CD14-positive monocyte (primary cell): ENCODE measurements at regions of chr2 and their contacts with region 1.

Region 1: DNA sequence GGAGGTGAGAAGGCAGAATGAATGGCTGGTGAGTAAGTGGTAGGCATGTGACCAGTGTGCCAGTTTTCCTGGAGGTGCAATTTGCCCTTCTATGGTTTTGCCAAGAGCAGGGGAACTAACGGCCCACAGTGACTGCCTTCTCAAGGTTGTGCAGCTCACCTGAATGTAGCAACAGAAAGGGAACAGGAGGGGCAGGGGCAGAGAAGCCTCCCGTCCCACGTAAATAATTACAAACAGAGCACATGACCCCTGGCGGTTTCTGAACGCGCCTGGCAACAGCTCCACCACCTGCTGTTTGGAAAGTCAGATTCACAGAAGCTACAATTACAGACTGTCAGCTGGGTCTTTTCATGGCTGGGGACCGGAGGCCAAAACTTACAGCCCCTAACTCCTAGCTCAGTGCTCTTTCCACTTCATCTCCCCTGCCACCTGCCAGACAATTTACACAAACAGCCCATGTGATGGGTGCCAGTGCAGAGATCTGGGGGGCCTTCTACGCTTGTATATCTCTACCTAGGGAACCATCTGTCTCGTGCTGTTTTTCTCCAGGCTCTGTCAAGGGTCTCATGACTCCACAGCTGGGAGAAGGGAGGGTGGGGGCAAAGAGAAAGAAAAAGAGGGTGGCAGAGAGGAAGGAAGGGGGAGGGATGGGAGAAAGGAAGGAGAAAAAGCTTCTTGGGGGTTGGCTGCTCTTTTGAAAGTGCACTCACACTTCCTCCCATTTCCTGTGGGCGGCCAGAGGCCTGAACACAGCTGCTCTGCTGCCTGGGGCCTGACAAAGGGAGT is 69.6 kb downstream of the POLR1A start:
- DNase-seq: peak; percentile 71 to 76 (median 73)
- H3K4me3 ChIP-seq: peak overlapping the region in 1 of 3 experiments; percentile 44
- H3K4me3 Mint-ChIP-seq: peak overlapping the region; percentile 58 to 86
- H3K27ac ChIP-seq: peak overlapping the region; percentile 96
- H3K27ac Mint-ChIP-seq: peak overlapping the region; percentile 94 to 99 (median 97)
- H3K4me1 ChIP-seq: peaks cover 46 to 54% of the 10 kb centered on the region in 2 donors
- H3K4me1 Mint-ChIP-seq: peaks cover 59% of the 10 kb centered on the region
- H3K27me3 ChIP-seq: no peaks in the 10 kb centered on the region
- H3K27me3 Mint-ChIP-seq: peaks cover 0 to 3% (median 2%) of the 10 kb centered on the region in 3 donors
- CTCF ChIP-seq: no peak

Region 2: DNA sequence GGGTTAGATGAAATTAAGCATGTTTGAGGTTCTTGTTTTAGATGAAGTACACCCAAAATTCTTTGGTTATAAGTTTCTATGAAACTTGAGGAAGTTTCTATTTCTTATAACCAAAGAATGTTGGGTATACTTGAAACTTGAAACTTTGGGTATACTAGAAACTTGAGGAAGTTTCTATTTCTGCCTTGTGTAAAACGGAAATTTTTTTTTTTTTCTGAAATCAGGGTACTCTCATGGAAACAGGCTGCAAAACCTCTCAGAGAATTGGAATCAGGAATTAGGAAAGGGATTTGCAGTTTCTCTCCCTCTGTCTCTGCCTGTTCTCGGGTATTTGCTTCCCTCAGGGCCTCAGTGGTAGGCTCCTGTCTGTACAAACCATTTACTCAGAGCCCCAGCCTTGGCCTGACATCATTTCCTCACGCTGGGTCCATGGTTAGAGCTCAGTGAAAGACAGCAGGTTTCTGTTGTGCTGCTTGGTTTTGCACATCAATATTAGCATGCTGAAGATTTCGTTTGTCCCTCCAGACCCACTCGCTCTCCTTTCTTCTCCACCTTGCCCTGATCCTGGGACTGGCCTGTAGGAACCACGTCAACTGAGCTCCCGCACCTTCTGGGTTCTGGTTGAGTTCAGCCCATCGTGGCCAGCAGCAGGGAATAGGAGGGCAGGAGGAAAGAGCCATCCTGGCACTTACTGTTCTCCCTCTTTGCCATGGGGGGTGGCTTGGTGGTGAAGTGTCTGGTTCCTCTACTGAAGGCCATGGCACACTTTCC is 36.8 kb before region 1 on chr2:
- intact Hi-C with region 1: loop called (anchors 5 kb)
- DNase-seq: peak; percentile 32 to 49 (median 34)
- H3K4me3 ChIP-seq: peak overlapping the region in 1 of 3 experiments; percentile 52
- H3K4me3 Mint-ChIP-seq: peak overlapping the region; percentile 1 to 67
- H3K27ac ChIP-seq: peak overlapping the region; percentile 88 to 94
- H3K27ac Mint-ChIP-seq: peak overlapping the region; percentile 81 to 95 (median 92)
- H3K4me1 ChIP-seq: peaks cover 80 to 86% of the 10 kb centered on the region in 2 donors
- H3K4me1 Mint-ChIP-seq: peaks cover 85% of the 10 kb centered on the region
- H3K27me3 ChIP-seq: no peaks in the 10 kb centered on the region
- H3K27me3 Mint-ChIP-seq: peaks cover 0 to 5% (median 3%) of the 10 kb centered on the region in 3 donors
- CTCF ChIP-seq: no peak